GM12878 (cell line): ENCODE measurements at regions of chr11 and their contacts with region 1.

Region 1: GRCh38 chr11:23041001-23041503 is 180.8 kb upstream of the CCDC179 start:
- DNase-seq: no peak
- ATAC-seq: no peak
- H3K4me3 ChIP-seq: no peak overlapping the region
- H3K27ac ChIP-seq: no peak overlapping the region
- H3K4me1 ChIP-seq: no peaks in the 10 kb centered on the region
- H3K27me3 ChIP-seq: no peaks in the 10 kb centered on the region
- CTCF ChIP-seq: no peak
- EP300 ChIP-seq: no peak
- POLR2A ChIP-seq: no peak
- RAD21 ChIP-seq: no peak

Region 2: DNA sequence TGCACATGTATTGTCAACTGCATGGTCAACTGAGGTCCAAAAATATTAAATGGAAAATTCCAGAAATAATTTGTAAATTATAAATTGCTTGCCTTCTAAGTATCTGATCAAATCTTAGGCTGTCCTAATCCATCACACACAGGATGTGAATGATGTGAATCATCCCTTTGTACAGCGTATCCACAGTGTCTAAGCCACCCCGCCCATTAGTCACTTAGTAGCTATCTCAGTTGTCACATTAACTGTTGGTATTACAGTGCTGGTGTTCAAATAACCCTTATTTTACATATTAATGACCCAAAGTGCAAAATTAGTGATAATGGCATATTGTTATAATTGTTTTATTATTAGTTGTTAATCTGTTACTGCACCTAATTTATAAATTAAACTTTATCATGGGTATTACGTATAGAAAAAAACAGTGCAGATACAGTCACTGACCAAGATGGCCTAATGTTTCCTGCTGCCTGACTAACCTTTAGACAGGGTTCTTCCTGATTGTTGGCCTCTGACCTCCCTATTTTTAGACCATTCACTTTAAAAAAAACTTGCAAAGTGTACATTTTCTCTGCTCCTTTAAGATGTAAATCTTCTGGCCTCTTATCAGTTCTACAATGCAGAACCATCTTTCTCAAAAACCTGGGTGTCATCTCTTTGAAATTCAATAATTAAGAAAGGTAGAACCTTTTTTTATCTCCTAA is 208.6 kb before region 1 on chr11:
- CTCF ChIA-PET with region 1: no interaction called
- POLR2A ChIA-PET with region 1: no interaction called
- RAD21 ChIA-PET with region 1: no interaction called
- SMC1A ChIA-PET with region 1: no interaction called
- in situ Hi-C with region 1: no loop called
- intact Hi-C with region 1: no loop called
- DNase-seq: no peak
- ATAC-seq: no peak
- H3K4me3 ChIP-seq: no peak overlapping the region
- H3K27ac ChIP-seq: no peak overlapping the region
- H3K4me1 ChIP-seq: no peaks in the 10 kb centered on the region
- H3K27me3 ChIP-seq: no peaks in the 10 kb centered on the region
- CTCF ChIP-seq: no peak
- EP300 ChIP-seq: no peak
- POLR2A ChIP-seq: no peak
- RAD21 ChIP-seq: no peak

Region 3: GRCh38 chr11:22898036-22898435 is 143.0 kb before region 1 on chr11:
- CTCF ChIA-PET with region 1: no interaction called
- POLR2A ChIA-PET with region 1: no interaction called
- RAD21 ChIA-PET with region 1: no interaction called
- SMC1A ChIA-PET with region 1: no interaction called
- in situ Hi-C with region 1: no loop called
- intact Hi-C with region 1: no loop called
- DNase-seq: no peak
- ATAC-seq: no peak
- H3K4me3 ChIP-seq: no peak overlapping the region
- H3K27ac ChIP-seq: no peak overlapping the region
- H3K4me1 ChIP-seq: no peaks in the 10 kb centered on the region
- H3K27me3 ChIP-seq: no peaks in the 10 kb centered on the region
- CTCF ChIP-seq: no peak
- EP300 ChIP-seq: no peak
- POLR2A ChIP-seq: no peak
- RAD21 ChIP-seq: no peak

Region 4: DNA sequence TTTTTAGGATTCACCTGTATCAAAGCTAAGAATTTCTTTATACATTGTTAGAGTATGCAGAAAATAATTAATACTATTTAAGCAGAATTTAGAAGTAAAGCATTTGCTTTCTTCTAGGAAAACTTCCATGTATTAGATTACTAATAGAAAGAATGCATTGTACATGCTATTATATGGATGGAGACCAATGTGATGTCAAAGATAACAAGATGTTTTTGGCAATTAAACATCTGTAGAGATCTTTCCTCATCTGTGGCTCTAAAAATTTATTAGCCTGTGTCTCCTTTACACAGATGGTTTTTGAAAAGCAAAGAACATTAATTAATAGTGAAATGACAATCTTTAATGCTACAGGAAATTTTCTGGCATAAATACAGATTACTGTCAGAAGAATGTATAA is 17.6 kb after region 1 on chr11:
- CTCF ChIA-PET with region 1: interaction called, 5 read pairs
- POLR2A ChIA-PET with region 1: no interaction called
- RAD21 ChIA-PET with region 1: interaction called, 9 read pairs
- SMC1A ChIA-PET with region 1: interaction called, 16 read pairs
- in situ Hi-C with region 1: no loop called
- intact Hi-C with region 1: no loop called
- DNase-seq: no peak
- ATAC-seq: no peak
- H3K4me3 ChIP-seq: no peak overlapping the region
- H3K27ac ChIP-seq: no peak overlapping the region
- H3K4me1 ChIP-seq: no peaks in the 10 kb centered on the region
- H3K27me3 ChIP-seq: no peaks in the 10 kb centered on the region
- CTCF ChIP-seq: no peak
- EP300 ChIP-seq: no peak
- POLR2A ChIP-seq: no peak
- RAD21 ChIP-seq: no peak